ENCODE measurements at regions of chr2 and their contacts with region 1.

Region 1: GRCh38 chr2:38709567-38710194 is 41.5 kb downstream of the SRSF7 start:
- DNase-seq: no peak
- H3K4me3 Mint-ChIP-seq: no peak overlapping the region
- H3K27ac Mint-ChIP-seq: peak overlapping the region; percentile 81
- H3K4me1 Mint-ChIP-seq: peaks cover 61% of the 10 kb centered on the region
- H3K27me3 Mint-ChIP-seq: no peaks in the 10 kb centered on the region

Region 2: DNA sequence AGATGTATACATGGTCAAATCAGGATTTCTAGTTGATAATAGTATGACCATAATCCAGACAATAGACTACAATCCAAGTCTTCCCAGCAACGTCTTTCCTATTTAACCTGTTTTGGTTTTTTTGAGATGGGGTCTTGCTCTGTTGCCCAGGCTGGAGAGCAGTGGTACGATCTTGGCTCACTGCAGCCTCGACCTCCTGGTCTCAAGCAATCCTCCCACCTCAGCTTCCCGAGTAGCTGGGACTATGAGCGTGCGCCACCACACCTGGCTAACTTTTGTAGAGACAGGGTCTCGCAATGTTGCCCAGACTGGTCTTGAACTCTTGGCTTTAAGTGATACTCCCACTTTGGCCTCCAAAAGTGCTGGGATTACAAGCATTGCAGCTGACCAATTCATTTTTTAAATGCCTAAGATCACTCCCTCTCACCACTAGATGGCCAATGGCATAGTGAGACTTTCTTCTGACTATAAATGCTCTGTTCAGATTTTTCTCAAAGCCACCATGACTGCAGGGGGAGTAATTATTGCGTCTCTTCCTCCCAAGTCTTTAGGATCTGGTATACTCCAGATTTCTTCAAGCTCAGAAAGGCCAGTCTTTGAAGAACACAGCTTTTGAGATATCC is 154.6 kb before region 1 on chr2:
- intact Hi-C with region 1: no loop called
- DNase-seq: no peak
- H3K4me3 Mint-ChIP-seq: no peak overlapping the region
- H3K27ac Mint-ChIP-seq: no peak overlapping the region
- H3K4me1 Mint-ChIP-seq: peaks cover 27% of the 10 kb centered on the region
- H3K27me3 Mint-ChIP-seq: no peaks in the 10 kb centered on the region

Region 3: GRCh38 chr2:38690499-38691294 is 19.0 kb before region 1 on chr2:
- intact Hi-C with region 1: loop called (anchors 2 kb)
- DNase-seq: no peak
- H3K4me3 Mint-ChIP-seq: no peak overlapping the region
- H3K27ac Mint-ChIP-seq: peak overlapping the region; percentile 84
- H3K4me1 Mint-ChIP-seq: peaks cover 45% of the 10 kb centered on the region
- H3K27me3 Mint-ChIP-seq: no peaks in the 10 kb centered on the region